PC-9 (cell line): ENCODE measurements at regions of chr1 and their contacts with region 1.

Region 1: GRCh38 chr1:26459573-26460031 is 12.6 kb upstream of the HMGN2 start:
- DNase-seq: no peak
- H3K4me3 ChIP-seq: no peak overlapping the region
- H3K27ac ChIP-seq: no peak overlapping the region
- H3K4me1 ChIP-seq: no peaks in the 10 kb centered on the region
- H3K27me3 ChIP-seq: no peaks in the 10 kb centered on the region
- CTCF ChIP-seq: no peak

Region 2: GRCh38 chr1:26431979-26432695 is 27.5 kb before region 1 on chr1 and contains the start of gene DHDDS:
- CTCF ChIA-PET with region 1: no interaction called
- POLR2A ChIA-PET with region 1: interaction called, 10 read pairs
- intact Hi-C with region 1: no loop called
- DNase-seq: peak; percentile 85 to 98
- H3K4me3 ChIP-seq: peak within 1 kb of the TSS; percentile 90
- H3K27ac ChIP-seq: peak within 1 kb of the TSS; percentile 75
- H3K4me1 ChIP-seq: peaks cover 12% of the 10 kb centered on the region
- H3K27me3 ChIP-seq: no peaks in the 10 kb centered on the region
- CTCF ChIP-seq: no peak
- total RNA-seq, gene DHDDS: 35.4 and 41.4 TPM in 2 replicates